ENCODE measurements at regions of chr5 and their contacts with region 1.

Region 1: DNA sequence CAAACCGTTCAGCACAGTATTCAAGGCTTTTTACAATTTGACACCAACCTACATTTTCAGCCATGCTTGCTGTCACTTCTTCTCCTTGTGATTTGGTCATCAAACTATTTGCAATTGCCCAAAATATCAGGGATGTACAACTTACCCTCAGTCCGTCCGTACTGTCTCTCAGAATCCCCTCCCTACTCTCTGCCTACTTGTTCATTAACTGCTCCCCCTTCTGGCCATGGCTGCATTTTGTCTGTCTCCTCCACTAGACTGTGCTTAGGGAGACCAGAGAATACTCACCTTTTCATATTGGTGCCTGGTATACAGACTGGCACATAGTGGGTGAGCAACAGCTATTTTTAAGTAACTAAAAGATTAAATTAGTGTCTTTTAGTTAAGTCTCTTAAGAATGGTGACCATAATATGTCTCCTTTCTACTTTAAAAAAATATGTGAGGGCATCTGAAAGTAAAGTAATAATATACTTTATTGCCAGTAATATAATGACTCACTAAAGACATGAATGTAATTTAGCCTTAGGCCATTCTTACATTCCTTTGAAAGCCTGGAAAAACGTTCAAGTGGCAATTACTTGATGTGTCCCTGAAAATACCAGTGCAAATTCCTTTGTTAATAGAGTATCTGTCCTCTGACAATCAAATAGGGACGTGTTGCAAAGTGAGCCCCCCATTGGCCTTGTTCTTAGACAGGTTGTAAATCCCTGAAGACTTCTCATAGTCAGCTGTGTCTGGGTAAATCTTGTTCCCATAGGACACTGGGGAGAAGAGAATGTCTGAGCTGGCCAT is 27.8 kb downstream of the PRLR start:
- DNase-seq: no peak
- ATAC-seq: peak; percentile 93
- H3K4me3 Mint-ChIP-seq: no peak overlapping the region
- H3K27ac Mint-ChIP-seq: no peak overlapping the region
- H3K4me1 Mint-ChIP-seq: peaks cover 2% of the 10 kb centered on the region
- H3K27me3 Mint-ChIP-seq: peaks cover 3% of the 10 kb centered on the region
- CTCF ChIP-seq: no peak

Region 2: GRCh38 chr5:35129918-35130485 is 72.5 kb before region 1 on chr5:
- CTCF ChIA-PET with region 1: no interaction called
- POLR2A ChIA-PET with region 1: no interaction called
- intact Hi-C with region 1: no loop called
- DNase-seq: no peak
- ATAC-seq: no peak
- H3K4me3 Mint-ChIP-seq: no peak overlapping the region
- H3K27ac Mint-ChIP-seq: no peak overlapping the region
- H3K4me1 Mint-ChIP-seq: no peaks in the 10 kb centered on the region
- H3K27me3 Mint-ChIP-seq: peaks cover 19% of the 10 kb centered on the region
- CTCF ChIP-seq: no peak

Region 3: GRCh38 chr5:35145691-35146315 is 56.7 kb before region 1 on chr5:
- CTCF ChIA-PET with region 1: no interaction called
- POLR2A ChIA-PET with region 1: no interaction called
- intact Hi-C with region 1: loop called (anchors 5 kb)
- DNase-seq: no peak
- ATAC-seq: no peak
- H3K4me3 Mint-ChIP-seq: no peak overlapping the region
- H3K27ac Mint-ChIP-seq: no peak overlapping the region
- H3K4me1 Mint-ChIP-seq: no peaks in the 10 kb centered on the region
- H3K27me3 Mint-ChIP-seq: peaks cover 8% of the 10 kb centered on the region
- CTCF ChIP-seq: no peak

Region 4: GRCh38 chr5:35218981-35219380 is 16.5 kb after region 1 on chr5:
- CTCF ChIA-PET with region 1: no interaction called
- POLR2A ChIA-PET with region 1: no interaction called
- intact Hi-C with region 1: loop called (anchors 1 kb)
- DNase-seq: no peak
- ATAC-seq: no peak
- H3K4me3 Mint-ChIP-seq: no peak overlapping the region
- H3K27ac Mint-ChIP-seq: no peak overlapping the region
- H3K4me1 Mint-ChIP-seq: no peaks in the 10 kb centered on the region
- H3K27me3 Mint-ChIP-seq: peaks cover 2% of the 10 kb centered on the region
- CTCF ChIP-seq: no peak

Region 5: GRCh38 chr5:35246900-35247647 is 44.6 kb after region 1 on chr5:
- CTCF ChIA-PET with region 1: no interaction called
- POLR2A ChIA-PET with region 1: no interaction called
- intact Hi-C with region 1: no loop called
- DNase-seq: no peak
- ATAC-seq: no peak
- H3K4me3 Mint-ChIP-seq: no peak overlapping the region
- H3K27ac Mint-ChIP-seq: no peak overlapping the region
- H3K4me1 Mint-ChIP-seq: no peaks in the 10 kb centered on the region
- H3K27me3 Mint-ChIP-seq: no peaks in the 10 kb centered on the region
- CTCF ChIP-seq: no peak

Region 6: DNA sequence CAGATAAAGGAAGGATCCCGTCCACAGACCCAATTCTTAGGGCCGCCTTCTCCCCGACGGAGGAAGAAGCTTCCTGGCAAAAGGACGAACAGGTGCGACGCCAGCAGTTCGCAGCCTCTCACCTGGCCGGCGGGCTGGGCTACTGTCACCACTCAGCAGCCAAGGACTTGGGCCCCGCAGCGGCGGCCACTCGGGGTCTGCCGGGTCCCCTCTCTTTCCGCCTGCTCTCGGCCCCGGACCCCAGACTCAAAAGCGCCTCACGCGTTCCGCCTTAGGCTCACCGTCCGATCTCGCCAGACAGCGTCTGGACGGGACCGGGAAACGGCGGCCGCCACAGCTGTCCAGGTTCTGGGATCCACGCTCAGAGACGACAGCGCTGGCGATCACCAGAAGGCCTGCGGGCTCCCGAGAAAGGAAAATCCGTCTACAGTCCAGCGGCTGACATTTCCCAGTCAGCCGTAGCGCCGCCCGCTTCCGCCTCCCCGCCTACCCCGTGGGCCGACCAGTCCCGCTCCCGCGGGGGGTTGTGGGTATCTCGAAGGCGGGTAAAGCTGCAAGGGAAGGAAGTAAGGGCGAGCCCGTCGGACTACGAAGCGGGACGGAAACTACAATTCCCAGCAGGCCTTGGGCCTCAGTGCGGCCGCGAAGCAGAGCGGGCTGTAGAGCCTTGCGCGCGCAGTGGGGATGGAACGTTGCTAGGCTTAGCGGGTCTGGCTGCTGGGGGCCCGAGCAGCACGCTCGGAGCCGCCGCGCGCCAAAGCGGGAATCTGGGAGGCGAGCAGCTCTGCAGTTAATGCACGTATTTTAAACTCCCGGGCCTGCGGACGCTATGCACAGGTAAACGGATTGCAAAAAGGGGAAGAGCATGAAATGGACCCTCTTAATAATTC is 949.2 kb after region 1 on chr5 and contains the starts of genes LMBRD2 and SKP2:
- CTCF ChIA-PET with region 1: no interaction called
- POLR2A ChIA-PET with region 1: no interaction called
- intact Hi-C with region 1: loop called (anchors 10 kb)
- DNase-seq: peak; percentile 95
- ATAC-seq: peak; percentile 97
- H3K4me3 Mint-ChIP-seq: peak within 1 kb of the TSS; percentile 96
- H3K27ac Mint-ChIP-seq: peak within 1 kb of the TSS; percentile 85
- H3K4me1 Mint-ChIP-seq: peaks cover 40% of the 10 kb centered on the region
- H3K27me3 Mint-ChIP-seq: no peaks in the 10 kb centered on the region
- CTCF ChIP-seq: no peak
- total RNA-seq, gene LMBRD2: 6.4 and 8.9 TPM in 2 replicates
- total RNA-seq, gene SKP2: 18.5 TPM in 2 replicates